ENCODE measurements at regions of chr10 and their contacts with region 1.

Region 1: GRCh38 chr10:23499372-23500132 is 60.7 kb downstream of the OTUD1 start:
- DNase-seq: no peak
- H3K4me3 ChIP-seq: no peak overlapping the region
- H3K27ac ChIP-seq: no peak overlapping the region
- H3K4me1 ChIP-seq: no peaks in the 10 kb centered on the region
- H3K27me3 ChIP-seq: no peaks in the 10 kb centered on the region
- CTCF ChIP-seq: no peak
- POLR2A ChIP-seq: no peak

Region 2: GRCh38 chr10:22752272-22752889 is 747.2 kb before region 1 on chr10:
- CTCF ChIA-PET with region 1: no interaction called
- POLR2A ChIA-PET with region 1: no interaction called
- dilution Hi-C with region 1: no loop called
- intact Hi-C with region 1: no loop called
- DNase-seq: no peak
- H3K4me3 ChIP-seq: no peak overlapping the region
- H3K27ac ChIP-seq: no peak overlapping the region
- H3K4me1 ChIP-seq: peaks cover 10% of the 10 kb centered on the region
- H3K27me3 ChIP-seq: no peaks in the 10 kb centered on the region
- CTCF ChIP-seq: no peak
- POLR2A ChIP-seq: no peak

Region 3: DNA sequence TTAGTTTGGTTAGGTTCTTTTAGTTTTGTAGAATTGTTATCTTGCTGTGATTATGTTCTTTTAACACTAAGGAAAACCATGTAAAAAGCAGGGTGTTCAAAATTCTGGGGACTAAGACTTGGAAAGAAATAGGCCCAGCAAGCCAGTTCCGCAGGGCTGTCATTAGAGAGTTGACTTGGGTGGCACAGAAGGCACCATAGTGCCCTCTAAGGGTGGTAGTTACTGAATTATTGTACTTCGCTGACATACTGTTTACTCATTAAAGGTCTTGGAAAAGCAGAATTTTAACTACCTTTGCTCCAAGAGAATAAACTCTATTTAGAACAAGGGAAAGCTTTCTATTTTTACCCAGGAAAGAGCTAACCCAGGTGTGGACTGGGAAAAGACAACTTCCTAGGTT is 25.9 kb after region 1 on chr10:
- CTCF ChIA-PET with region 1: no interaction called
- POLR2A ChIA-PET with region 1: no interaction called
- dilution Hi-C with region 1: no loop called
- intact Hi-C with region 1: loop called (anchors 1 kb)
- DNase-seq: no peak
- H3K4me3 ChIP-seq: no peak overlapping the region
- H3K27ac ChIP-seq: no peak overlapping the region
- H3K4me1 ChIP-seq: no peaks in the 10 kb centered on the region
- H3K27me3 ChIP-seq: no peaks in the 10 kb centered on the region
- CTCF ChIP-seq: peak in 1 of 2 donors; percentile 6
- POLR2A ChIP-seq: no peak

Region 4: DNA sequence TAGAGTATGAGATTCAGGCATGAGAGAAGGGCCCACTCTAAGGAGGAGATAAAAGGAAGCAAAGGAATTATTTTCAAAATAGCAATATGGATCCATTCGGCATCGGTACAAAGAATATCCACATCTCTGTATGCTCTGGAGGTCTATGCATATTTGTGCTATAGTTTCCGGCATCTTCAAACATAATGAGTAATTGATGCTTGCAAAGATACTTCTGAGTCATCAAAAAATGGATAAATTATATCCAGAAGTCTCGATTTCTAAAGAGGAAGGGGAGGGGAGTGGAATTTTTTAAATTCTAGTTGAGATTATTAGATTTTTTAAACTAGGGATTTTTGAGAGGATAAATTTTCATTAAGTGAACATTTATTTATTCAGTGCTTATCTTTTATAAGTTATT is 636.5 kb after region 1 on chr10:
- CTCF ChIA-PET with region 1: no interaction called
- POLR2A ChIA-PET with region 1: no interaction called
- dilution Hi-C with region 1: no loop called
- intact Hi-C with region 1: no loop called
- DNase-seq: no peak
- H3K4me3 ChIP-seq: no peak overlapping the region
- H3K27ac ChIP-seq: no peak overlapping the region
- H3K4me1 ChIP-seq: no peaks in the 10 kb centered on the region
- H3K27me3 ChIP-seq: no peaks in the 10 kb centered on the region
- CTCF ChIP-seq: no peak
- POLR2A ChIP-seq: no peak